ENCODE measurements at regions of chr12 and their contacts with region 1.

Region 1: GRCh38 chr12:98939350-98939749 is 294.3 kb downstream of the APAF1 start:
- DNase-seq: peak in 6 of 10 donors; percentile 12 to 80 (median 34)

Region 2: DNA sequence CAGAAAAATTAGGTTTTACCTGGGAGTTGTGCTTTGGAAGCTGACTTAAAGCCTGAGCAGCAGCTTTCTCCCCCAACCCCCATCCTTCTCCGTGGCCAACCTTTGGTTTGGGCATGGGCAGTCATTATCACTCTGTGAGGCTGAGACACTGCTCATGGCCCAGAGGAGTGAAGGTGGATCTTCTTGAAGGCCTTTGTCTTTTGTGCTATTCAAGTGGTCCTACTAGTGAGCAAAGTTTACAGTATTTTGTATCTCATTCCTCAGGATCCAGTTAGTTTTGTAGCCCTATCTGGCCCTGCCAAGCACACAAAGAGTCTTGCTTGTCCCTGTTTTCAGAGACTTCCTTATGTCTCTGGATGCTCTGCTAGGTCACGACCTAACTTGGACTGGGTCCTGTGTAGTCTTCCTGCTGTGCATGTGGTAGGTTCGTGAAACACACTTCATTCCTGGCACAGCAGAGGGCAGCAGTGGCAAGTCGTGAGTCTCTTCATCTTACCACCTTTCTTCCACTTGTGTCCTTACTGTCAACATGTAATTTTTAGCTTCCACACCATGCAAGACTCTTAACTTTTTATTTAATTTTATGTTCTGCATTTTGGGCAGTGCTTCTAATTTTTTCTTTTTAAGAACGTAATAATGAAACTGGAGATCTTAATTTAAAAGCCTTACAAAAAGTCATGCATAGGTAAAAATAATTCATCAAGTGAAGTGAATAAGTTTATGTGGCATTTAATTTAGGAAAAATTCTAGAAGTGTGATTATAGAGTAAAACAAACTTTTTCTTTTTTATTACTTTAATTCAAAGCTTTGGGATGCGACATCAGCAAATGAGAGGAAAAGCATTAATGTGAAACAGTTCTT is 240.5 kb before region 1 on chr12:
- intact Hi-C with region 1: loop called (anchors 2 kb)
- DNase-seq: peak; percentile 46 to 97 (median 75)

Region 3: DNA sequence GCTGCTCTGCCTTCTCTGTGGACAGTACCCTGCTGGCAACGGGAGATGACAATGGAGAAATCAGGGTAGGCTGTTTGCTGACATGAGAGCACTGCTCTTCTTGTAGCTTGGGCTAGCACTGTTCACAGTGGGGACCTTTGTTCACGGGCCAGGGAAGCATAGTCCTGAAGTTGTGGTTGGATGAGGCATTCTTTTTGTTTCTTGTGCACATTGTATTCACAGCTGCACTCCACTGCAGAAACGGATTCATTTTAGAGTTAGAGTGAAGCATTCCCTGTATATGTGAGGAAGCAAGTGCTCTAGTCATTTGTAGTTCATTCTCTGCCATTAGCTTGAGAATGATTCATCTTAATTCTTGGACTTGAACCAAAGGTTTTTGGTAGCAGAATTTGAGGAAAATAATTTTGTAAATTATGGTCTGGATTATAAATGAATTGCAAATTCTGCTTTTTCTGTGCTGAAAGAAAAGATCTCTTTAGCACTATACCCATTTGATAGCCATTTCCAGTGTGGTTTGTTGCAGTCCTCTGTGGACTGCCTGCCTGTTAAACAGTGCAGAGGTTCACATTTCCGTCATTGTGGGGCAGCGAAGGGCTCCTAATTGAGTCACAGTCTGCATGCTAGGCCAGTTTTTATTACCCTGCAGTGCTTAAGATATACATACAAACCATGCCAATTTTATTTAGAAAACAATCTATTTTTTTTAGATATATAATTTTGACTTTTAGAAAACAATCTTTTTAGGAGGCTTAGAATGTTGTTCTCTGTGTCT is 213.7 kb before region 1 on chr12:
- intact Hi-C with region 1: loop called (anchors 10 kb)
- DNase-seq: peak in 9 of 10 donors; percentile 56 to 96 (median 66)